ENCODE measurements at regions of chr1 and their contacts with region 1.

Region 1: GRCh38 chr1:64136752-64137411 is 66.5 kb upstream of the UBE2U start:
- DNase-seq: peak in 4 of 5 donors; percentile 64 to 77 (median 66)
- ATAC-seq: peak; percentile 53 to 87 (median 83)
- H3K4me3 ChIP-seq: no peak overlapping the region
- H3K27ac ChIP-seq: peak overlapping the region in 6 of 12 donors; percentile 4 to 55 (median 28)
- H3K4me1 ChIP-seq: peaks cover 0 to 24% (median 4%) of the 10 kb centered on the region in 12 donors
- H3K27me3 ChIP-seq: no peaks in the 10 kb centered on the region
- CTCF ChIP-seq: peak; percentile 77 to 94 (median 87)
- POLR2A ChIP-seq: no peak

Region 2: GRCh38 chr1:63624911-63625310 is 512.0 kb before region 1 on chr1:
- intact Hi-C with region 1: loop called in 2 of 10 experiments (anchors 5 kb)
- DNase-seq: no peak
- ATAC-seq: no peak
- H3K4me3 ChIP-seq: no peak overlapping the region
- H3K27ac ChIP-seq: peak overlapping the region in 3 of 12 donors; percentile 10 to 66 (median 48)
- H3K4me1 ChIP-seq: peaks cover 0 to 58% (median 18%) of the 10 kb centered on the region in 12 donors
- H3K27me3 ChIP-seq: no peaks in the 10 kb centered on the region
- CTCF ChIP-seq: no peak
- POLR2A ChIP-seq: no peak

Region 3: DNA sequence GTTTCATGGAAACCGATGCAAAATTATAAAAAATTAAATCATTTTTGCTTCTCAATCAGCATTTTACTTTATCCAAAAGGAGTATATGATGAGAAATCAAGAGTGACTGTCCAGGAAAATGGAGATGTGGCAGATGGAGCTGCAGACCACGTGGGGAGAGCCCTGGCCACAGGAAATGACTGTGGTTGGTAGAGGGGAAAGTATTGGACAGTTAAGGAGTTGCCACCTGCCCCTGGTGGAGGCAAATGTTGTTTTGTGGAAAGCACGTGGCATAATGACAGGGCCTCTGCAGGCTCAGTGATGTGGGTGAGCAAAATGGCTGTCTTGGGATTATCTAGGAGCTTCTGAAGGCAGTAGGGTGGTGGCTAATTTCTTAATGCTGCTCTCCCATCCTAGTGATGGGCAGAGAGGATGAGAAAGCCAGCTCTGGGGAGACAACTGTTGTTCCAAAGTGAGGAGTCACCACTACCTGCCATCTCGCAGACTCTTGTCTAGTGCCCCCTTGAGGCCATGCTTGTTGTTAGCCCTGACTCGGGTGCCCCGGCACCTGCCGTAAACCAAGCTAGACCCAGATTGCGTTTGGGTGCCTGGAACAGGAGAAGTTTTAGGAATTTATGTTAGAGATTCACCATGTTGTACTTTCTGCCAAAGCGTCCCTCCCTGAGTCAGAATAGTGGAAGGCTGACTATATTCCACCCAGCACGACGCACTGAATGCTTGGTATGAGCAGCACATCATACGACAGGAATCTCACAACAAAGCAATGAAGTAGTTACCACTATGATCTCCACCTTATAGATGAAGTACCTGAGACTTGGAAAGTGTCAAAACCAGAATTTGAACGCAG is 219.1 kb before region 1 on chr1:
- intact Hi-C with region 1: loop called in 2 of 10 experiments (anchors 5 to 10 kb)
- DNase-seq: no peak
- ATAC-seq: no peak
- H3K4me3 ChIP-seq: no peak overlapping the region
- H3K27ac ChIP-seq: no peak overlapping the region
- H3K4me1 ChIP-seq: peaks cover 0 to 72% (median 19%) of the 10 kb centered on the region in 12 donors
- H3K27me3 ChIP-seq: no peaks in the 10 kb centered on the region
- CTCF ChIP-seq: peak in 3 of 12 donors; percentile 17 to 25 (median 18)
- POLR2A ChIP-seq: no peak

Region 4: GRCh38 chr1:64038965-64039926 is 97.6 kb before region 1 on chr1:
- intact Hi-C with region 1: loop called in 4 of 10 experiments (anchors 5 to 10 kb)
- DNase-seq: peak in 3 of 5 donors; percentile 31 to 37 (median 33)
- ATAC-seq: peak; percentile 46 to 78 (median 70)
- H3K4me3 ChIP-seq: no peak overlapping the region
- H3K27ac ChIP-seq: peak overlapping the region in 11 of 12 donors; percentile 8 to 88 (median 78)
- H3K4me1 ChIP-seq: peaks cover 0 to 57% (median 24%) of the 10 kb centered on the region in 12 donors
- H3K27me3 ChIP-seq: no peaks in the 10 kb centered on the region
- CTCF ChIP-seq: no peak
- POLR2A ChIP-seq: no peak

Region 5: DNA sequence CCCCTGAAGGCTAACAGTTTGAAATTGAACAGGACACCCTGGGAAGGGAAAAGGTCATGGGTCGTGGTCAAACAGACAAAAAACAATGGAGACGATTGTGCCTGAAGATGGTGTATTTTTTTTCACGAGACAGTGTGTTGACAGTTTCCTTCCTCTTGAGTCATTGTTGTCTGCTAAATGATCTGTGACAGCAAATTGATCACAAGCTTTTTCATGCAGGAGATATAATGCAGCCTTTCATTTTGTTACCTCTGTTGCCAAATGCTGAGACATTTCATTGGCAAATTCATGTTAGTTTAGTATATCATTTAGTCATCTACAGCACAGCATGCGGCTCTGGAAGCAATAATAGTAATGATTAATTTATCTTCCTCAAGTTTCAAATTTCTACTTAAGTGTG is 94.3 kb after region 1 on chr1:
- intact Hi-C with region 1: loop called in 1 of 10 experiments (anchors 5 kb)
- DNase-seq: no peak
- ATAC-seq: no peak
- H3K4me3 ChIP-seq: no peak overlapping the region
- H3K27ac ChIP-seq: no peak overlapping the region
- H3K4me1 ChIP-seq: no peaks in the 10 kb centered on the region
- H3K27me3 ChIP-seq: peaks cover 0 to 19% (median 0%) of the 10 kb centered on the region in 9 donors
- CTCF ChIP-seq: no peak
- POLR2A ChIP-seq: no peak

Region 6: DNA sequence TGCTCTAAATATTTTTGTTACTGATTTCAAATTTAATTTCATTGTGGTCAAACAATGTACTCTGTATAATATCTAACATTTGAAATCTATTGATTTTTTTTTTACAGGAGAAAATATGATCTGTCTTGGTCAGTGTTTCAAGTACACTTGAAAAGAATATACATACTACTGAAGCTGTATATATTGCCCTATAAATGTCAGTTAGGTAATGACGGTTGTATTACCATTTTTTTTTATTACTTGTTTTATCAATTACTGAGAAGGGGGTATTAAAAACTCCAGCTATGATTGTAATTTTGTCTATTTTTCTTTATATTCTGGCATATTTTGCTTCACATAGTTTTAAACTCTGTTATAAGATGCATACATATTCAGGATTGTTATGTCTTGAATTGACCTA is 273.3 kb after region 1 on chr1:
- intact Hi-C with region 1: no loop called
- DNase-seq: no peak
- ATAC-seq: no peak
- H3K4me3 ChIP-seq: no peak overlapping the region
- H3K27ac ChIP-seq: no peak overlapping the region
- H3K4me1 ChIP-seq: no peaks in the 10 kb centered on the region
- H3K27me3 ChIP-seq: no peaks in the 10 kb centered on the region
- CTCF ChIP-seq: no peak
- POLR2A ChIP-seq: no peak